A549 (cell line): ENCODE measurements at regions of chr20 and their contacts with region 1.

Region 1: DNA sequence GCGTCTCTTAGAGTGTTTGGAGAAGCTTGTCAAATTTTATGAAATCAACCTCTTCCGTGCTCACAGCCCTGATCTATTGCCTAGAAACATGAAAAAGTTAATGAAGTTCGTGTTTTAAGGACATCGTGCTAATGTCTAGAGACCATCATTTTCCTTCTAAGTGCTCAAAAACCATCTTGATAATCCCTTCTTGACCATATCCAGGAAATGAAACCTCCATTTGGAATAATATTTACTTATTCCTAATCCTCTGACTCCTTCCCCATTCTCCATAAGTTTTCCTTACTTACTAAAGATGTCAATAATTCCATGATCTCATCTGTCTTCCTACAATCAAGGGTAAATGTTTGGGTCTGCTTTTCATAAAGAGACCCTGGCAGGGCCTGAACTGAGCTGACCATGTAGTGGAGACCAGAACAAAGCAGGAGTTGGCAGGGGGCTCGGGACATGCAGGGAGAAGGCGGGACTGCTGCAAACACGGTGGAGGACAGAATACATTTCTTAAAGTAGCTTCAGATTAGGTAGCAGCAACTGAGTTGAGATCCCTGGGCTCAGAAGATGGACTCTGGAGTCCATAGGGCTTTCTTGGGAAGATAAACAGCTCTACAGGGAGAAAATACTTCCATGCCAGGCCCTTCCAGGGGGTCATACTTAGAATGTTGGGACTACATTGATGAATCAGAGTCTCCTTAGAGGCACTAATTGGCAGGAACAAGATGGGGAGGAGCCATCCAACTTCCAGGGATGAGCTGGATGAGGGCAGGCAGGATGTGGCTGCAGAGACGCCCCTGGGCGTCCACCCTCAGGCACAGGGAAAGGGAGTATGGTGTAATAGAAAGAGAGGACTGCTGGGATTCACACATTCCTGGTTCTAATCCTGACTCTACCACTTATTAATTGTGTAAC is 100.7 kb downstream of the RIN2 start:
- DNase-seq: no peak
- ATAC-seq: 0 out of 6 replicates have a peak, but pooled peaks of 1 of the 2 experiments have one; percentile 16
- H3K4me3 ChIP-seq: no peak overlapping the region
- H3K27ac ChIP-seq: peak overlapping the region in 1 of 2 experiments; percentile 67; a peak in 4 of 6 replicates
- H3K4me1 ChIP-seq: peaks cover 38% of the 10 kb centered on the region
- CTCF ChIP-seq: no peak
- EP300 ChIP-seq: no peak
- POLR2A ChIP-seq: no peak
- RAD21 ChIP-seq: no peak

Region 2: GRCh38 chr20:18904624-18905023 is 954.1 kb before region 1 on chr20:
- CTCF ChIA-PET with region 1: no interaction called
- POLR2A ChIA-PET with region 1: no interaction called
- DNase-seq: peak in 1 of 2 experiments; percentile 32
- ATAC-seq: peak in 1 of 2 experiments; percentile 63; a peak in 3 of 6 replicates
- H3K4me3 ChIP-seq: no peak overlapping the region
- H3K27ac ChIP-seq: no peak overlapping the region
- H3K4me1 ChIP-seq: no peaks in the 10 kb centered on the region
- CTCF ChIP-seq: peak; percentile 17; the same call in 1 of the 3 replicates
- EP300 ChIP-seq: no peak
- POLR2A ChIP-seq: no peak
- RAD21 ChIP-seq: peak in 1 of 2 experiments; percentile 51; a peak in 2 of 5 replicates

Region 3: DNA sequence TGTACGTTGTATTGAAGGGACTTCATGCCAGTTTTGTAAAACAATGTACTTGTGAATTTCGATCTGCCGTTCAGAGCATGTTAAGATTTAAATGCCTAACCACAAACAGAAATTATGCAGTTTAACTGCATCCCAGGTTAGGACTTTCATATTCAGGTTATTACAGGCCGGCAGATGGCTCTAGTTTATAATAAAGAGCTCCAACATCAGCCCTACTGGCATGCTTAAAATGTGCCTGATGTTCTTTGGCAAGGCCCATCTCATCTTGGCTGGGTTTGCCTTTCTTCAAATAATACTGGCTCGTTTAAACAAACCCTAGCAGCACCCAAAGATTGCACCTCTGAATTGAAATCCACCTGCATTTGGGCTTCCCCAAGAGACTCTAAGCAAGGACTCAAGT is 270.0 kb before region 1 on chr20:
- CTCF ChIA-PET with region 1: no interaction called
- POLR2A ChIA-PET with region 1: no interaction called
- DNase-seq: no peak
- ATAC-seq: no peak
- H3K4me3 ChIP-seq: no peak overlapping the region
- H3K27ac ChIP-seq: no peak overlapping the region
- H3K4me1 ChIP-seq: no peaks in the 10 kb centered on the region
- CTCF ChIP-seq: no peak
- EP300 ChIP-seq: no peak
- POLR2A ChIP-seq: no peak
- RAD21 ChIP-seq: 0 out of 5 replicates have a peak, but pooled peaks of 1 of the 2 experiments have one; percentile 17

Region 4: DNA sequence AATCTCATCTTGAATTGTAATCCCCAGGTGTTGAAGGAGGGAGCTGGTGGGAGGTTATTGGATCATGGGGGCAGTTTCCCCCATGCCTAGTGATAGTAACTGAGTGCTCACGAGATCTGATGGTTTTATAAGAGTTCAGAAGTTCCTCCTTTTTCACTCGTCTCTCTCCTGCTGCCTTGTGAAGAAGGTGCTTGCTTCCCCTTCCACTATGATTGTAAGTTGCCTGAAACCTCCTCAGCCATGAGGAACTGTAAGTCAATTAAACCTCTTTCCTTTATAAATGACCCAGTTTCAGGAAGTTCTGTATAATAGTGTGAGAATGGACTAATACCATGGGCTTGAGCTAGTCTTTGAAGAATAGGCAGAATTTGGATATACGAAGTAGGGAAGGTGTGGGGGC is 13.3 kb after region 1 on chr20:
- CTCF ChIA-PET with region 1: interaction called, 11 read pairs
- POLR2A ChIA-PET with region 1: no interaction called
- DNase-seq: no peak
- ATAC-seq: no peak
- H3K4me3 ChIP-seq: no peak overlapping the region
- H3K27ac ChIP-seq: peak overlapping the region in 1 of 2 experiments; percentile 11; a peak in 1 of 6 replicates
- H3K4me1 ChIP-seq: peaks cover 23% of the 10 kb centered on the region
- CTCF ChIP-seq: no peak
- EP300 ChIP-seq: no peak
- POLR2A ChIP-seq: no peak
- RAD21 ChIP-seq: no peak

Region 5: DNA sequence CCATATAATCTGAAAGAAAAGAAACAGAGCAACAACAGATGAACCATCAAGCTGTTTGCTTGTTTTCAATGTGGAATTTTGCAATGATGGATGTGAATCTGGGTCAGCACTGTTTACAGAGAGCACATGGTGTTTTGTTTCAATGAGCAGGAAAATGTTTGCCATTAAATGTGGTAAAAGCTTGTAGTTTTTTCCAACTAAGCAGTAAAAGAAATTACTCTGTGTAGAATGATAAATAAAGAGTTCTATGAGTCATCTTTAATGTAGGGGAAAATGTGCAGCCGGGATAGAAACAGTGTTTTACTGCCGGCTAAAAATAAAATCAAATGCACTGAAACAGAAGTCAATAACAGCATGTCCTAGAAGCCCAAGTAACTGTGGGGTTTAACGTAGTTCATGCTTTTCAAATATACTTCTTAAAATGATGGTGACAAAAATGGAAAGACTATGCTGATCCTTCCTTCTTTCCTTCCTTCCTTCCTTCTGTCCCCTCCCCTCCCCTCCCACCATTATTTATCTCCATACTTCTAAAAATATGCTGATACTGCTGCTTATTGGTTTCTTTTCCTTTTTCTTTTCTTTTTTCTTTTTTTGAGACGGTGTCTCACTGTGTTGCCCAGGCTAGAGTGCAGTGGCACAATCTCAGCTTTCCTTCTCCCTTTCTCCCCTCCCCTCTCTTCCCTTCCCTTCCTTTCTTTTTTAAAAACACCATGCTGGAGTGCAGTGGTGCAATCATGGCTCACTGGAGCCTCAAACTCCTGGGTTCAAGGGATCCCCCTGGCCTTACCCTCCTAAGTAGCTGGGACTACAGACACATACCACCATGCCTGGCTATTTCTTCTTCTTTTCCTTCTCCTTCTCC is 152.2 kb after region 1 on chr20:
- CTCF ChIA-PET with region 1: no interaction called
- POLR2A ChIA-PET with region 1: no interaction called
- DNase-seq: peak in 1 of 2 experiments; percentile 46
- ATAC-seq: peak in 1 of 2 experiments; percentile 52; a peak in 3 of 6 replicates
- H3K4me3 ChIP-seq: 0 out of 3 replicates have a peak overlapping the region, but pooled peaks have one; percentile 2
- H3K27ac ChIP-seq: peak overlapping the region; percentile 53 to 70
- H3K4me1 ChIP-seq: peaks cover 15% of the 10 kb centered on the region
- CTCF ChIP-seq: no peak
- EP300 ChIP-seq: no peak
- POLR2A ChIP-seq: no peak
- RAD21 ChIP-seq: 0 out of 5 replicates have a peak, but pooled peaks of 1 of the 2 experiments have one; percentile 9